Activated B cell treated with CpG ODN at 0.5 μM for 24 hours (primary cell): ENCODE measurements at regions of chr20 and their contacts with region 1.

Region 1: GRCh38 chr20:50115591-50116372 is 2.8 kb upstream of the UBE2V1 start:
- DNase-seq: peak; percentile 80
- ATAC-seq: peak; percentile 76
- H3K4me3 Mint-ChIP-seq: peak overlapping the region; percentile 89
- H3K27ac Mint-ChIP-seq: peak overlapping the region; percentile 73
- H3K4me1 Mint-ChIP-seq: peaks cover 52% of the 10 kb centered on the region
- H3K27me3 Mint-ChIP-seq: no peaks in the 10 kb centered on the region
- CTCF ChIP-seq: no peak

Region 2: DNA sequence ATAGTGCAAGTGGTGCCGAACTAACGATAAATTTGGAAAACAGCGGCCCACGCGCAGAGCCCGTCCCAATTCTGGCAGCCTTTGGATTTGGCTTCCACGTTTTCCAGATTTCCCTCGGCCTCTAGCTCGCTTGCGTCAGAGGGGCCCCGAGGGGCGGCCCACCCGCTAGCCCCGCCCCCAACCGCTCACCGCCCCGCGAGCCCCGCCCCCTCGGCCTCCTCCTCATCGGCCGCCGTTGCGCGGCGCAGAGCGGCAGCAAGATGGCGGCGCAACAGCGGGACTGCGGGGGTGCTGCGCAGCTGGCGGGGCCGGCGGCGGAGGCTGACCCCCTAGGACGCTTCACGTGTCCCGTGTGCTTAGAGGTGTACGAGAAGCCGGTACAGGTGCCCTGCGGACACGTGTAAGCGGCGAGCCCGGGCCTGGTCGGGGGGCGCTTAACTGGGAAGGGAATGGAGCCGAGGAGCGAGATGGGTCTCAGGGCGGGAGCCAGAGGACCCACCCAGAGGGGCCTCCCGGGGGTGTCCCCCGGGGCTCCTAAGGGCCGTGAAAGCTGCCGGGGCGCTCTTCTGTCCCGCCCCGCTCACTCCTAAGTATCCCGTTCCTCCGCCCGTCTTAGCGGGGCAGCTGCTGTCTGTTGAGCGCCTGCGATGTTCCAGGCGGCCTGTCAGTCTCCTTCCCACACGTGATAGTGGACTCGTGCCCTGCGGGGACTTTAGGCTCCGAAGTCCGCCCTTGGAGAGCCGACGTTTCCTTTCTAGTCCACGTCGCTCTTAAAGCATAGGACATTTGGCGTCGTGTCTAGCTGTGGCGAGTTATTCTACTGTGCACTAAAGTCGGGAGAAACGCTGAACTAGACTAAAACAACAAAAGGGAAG is 179.4 kb before region 1 on chr20 and contains the start of gene RNF114:
- CTCF ChIA-PET with region 1: no interaction called
- POLR2A ChIA-PET with region 1: interaction called, 3 read pairs
- intact Hi-C with region 1: loop called (anchors 1 kb)
- DNase-seq: peak; percentile 83
- ATAC-seq: peak; percentile 90
- H3K4me3 Mint-ChIP-seq: peak within 1 kb of the TSS; percentile 97
- H3K27ac Mint-ChIP-seq: peak within 1 kb of the TSS; percentile 88
- H3K4me1 Mint-ChIP-seq: peaks cover 58% of the 10 kb centered on the region
- H3K27me3 Mint-ChIP-seq: no peaks in the 10 kb centered on the region
- CTCF ChIP-seq: no peak
- total RNA-seq, gene RNF114: 56.5 and 56.6 TPM in 2 replicates

Region 3: GRCh38 chr20:50133474-50134217 is 17.9 kb after region 1 on chr20:
- CTCF ChIA-PET with region 1: interaction called, 3 read pairs
- POLR2A ChIA-PET with region 1: no interaction called
- intact Hi-C with region 1: loop called (anchors 1 kb)
- DNase-seq: no peak
- ATAC-seq: no peak
- H3K4me3 Mint-ChIP-seq: no peak overlapping the region
- H3K27ac Mint-ChIP-seq: no peak overlapping the region
- H3K4me1 Mint-ChIP-seq: no peaks in the 10 kb centered on the region
- H3K27me3 Mint-ChIP-seq: no peaks in the 10 kb centered on the region
- CTCF ChIP-seq: no peak

Region 4: DNA sequence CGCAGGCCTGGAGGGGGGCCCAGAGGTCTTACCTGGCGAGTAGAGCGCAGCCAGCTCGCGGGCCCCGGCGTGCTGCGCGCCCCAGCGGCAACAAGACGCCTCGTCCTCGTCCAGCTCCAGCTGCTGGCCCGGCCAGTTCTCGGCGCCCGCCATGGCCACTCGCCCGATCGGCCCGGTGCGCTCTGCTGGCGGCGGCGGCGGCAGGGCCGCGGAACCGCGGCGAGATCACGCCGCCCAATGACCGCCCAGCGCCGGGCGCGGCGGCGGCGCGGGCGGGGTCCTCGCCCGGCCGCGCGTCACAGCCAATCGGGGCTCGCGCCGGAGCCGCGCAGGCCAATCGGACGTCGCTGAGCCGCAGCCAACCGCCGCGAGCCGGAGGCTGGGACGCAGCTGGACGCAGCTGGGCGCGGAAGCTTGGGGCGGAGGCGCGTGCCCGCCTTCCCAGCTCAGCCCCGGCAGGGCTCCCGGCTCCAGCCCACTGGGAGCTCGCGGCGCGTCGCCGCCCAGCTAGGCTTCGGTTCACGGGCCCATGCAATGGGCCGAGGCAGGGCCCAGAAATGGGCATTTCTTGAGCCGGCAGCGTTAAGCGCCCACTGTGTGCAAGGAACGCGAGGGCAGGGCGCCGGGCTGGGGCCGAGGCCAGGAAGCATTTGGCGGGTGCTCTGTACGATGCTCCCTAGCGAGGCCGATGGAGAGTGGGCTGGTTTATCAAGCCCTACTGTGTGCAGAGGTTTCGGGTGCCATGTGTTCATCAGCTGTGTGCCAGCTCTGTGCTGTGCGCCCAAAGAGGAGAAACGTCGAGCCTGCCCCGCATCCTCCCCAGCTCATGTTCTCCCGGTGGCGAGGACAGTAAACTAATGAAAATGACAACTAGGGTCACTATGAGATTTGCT is 37.9 kb after region 1 on chr20 and contains the start of gene PEDS1:
- CTCF ChIA-PET with region 1: interaction called, 16 read pairs
- POLR2A ChIA-PET with region 1: interaction called, 15 read pairs
- intact Hi-C with region 1: loop called (anchors 1 kb)
- DNase-seq: peak; percentile 78
- ATAC-seq: peak; percentile 98
- H3K4me3 Mint-ChIP-seq: peak within 1 kb of the TSS; percentile 85
- H3K27ac Mint-ChIP-seq: peak within 1 kb of the TSS; percentile 59
- H3K4me1 Mint-ChIP-seq: peaks cover 36% of the 10 kb centered on the region
- H3K27me3 Mint-ChIP-seq: no peaks in the 10 kb centered on the region
- CTCF ChIP-seq: no peak
- total RNA-seq, gene PEDS1: 9.8 and 9.9 TPM in 2 replicates

Region 5: DNA sequence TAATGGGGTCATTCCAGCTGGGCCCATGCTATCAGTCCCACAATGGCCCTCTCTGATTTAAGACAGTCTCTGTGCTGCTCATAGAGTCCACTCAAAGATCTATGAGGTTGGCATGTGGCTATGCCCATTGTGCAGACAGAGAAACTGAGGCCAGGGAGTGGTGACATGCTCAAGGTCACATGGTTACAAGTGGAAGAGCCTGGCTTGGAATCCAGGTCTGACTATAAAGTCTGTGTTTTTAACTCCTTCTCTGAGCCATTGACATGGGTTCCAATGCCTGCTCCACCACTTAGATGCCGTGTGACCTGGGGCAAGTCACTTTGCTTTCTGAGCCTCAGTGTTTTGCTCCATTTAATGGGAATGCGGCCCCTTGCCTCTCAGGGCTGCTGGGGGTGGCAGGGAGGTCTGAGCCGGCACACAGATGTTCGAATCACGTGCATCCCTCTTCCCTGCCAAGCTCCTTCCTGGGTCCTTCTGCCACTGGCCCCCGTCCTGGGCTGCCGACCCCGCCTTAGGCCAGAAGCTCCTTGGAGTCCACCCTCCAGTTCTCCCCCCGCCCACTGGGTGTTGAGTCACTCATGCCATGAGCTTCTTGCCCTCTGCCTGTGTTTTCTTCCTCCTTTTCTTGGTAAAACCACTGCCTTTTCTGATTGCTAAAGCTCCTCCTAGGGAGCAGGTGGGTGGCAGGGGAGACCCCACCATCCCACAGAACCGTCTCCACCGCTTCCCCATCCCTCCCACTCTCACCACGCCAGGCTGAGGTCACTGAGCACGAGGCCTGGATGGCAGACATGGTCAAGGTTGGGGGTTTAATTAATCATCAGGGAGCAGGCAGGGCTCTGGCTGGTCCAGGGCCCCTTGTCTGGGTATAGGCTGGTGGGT is 110.6 kb after region 1 on chr20:
- CTCF ChIA-PET with region 1: no interaction called
- POLR2A ChIA-PET with region 1: no interaction called
- intact Hi-C with region 1: no loop called
- DNase-seq: no peak
- ATAC-seq: no peak
- H3K4me3 Mint-ChIP-seq: no peak overlapping the region
- H3K27ac Mint-ChIP-seq: no peak overlapping the region
- H3K4me1 Mint-ChIP-seq: no peaks in the 10 kb centered on the region
- H3K27me3 Mint-ChIP-seq: peaks cover 7% of the 10 kb centered on the region
- CTCF ChIP-seq: no peak

Region 6: GRCh38 chr20:50471204-50471610 is 355.4 kb after region 1 on chr20:
- CTCF ChIA-PET with region 1: no interaction called
- POLR2A ChIA-PET with region 1: interaction called, 3 read pairs
- intact Hi-C with region 1: loop called (anchors 5 kb)
- DNase-seq: no peak
- ATAC-seq: no peak
- H3K4me3 Mint-ChIP-seq: no peak overlapping the region
- H3K27ac Mint-ChIP-seq: no peak overlapping the region
- H3K4me1 Mint-ChIP-seq: peaks cover 38% of the 10 kb centered on the region
- H3K27me3 Mint-ChIP-seq: no peaks in the 10 kb centered on the region
- CTCF ChIP-seq: no peak